A673 (cell line): ENCODE measurements at regions of chr10 and their contacts with region 1.

Region 1: GRCh38 chr10:4767033-4767814 is 58.8 kb upstream of the AKR1E2 start:
- DNase-seq: peak; percentile 80
- H3K4me3 ChIP-seq: no peak overlapping the region
- H3K27ac ChIP-seq: peak overlapping the region; percentile 71
- H3K4me1 ChIP-seq: peaks cover 61% of the 10 kb centered on the region
- H3K27me3 ChIP-seq: no peaks in the 10 kb centered on the region
- CTCF ChIP-seq: peak; percentile 81

Region 2: GRCh38 chr10:3197348-3198003 is 1569.7 kb before region 1 on chr10:
- CTCF ChIA-PET with region 1: no interaction called
- POLR2A ChIA-PET with region 1: no interaction called
- intact Hi-C with region 1: loop called (anchors 5 kb)
- DNase-seq: peak; percentile 83
- H3K4me3 ChIP-seq: peak overlapping the region; percentile 20
- H3K27ac ChIP-seq: no peak overlapping the region
- H3K4me1 ChIP-seq: peaks cover 11% of the 10 kb centered on the region
- H3K27me3 ChIP-seq: no peaks in the 10 kb centered on the region
- CTCF ChIP-seq: peak; percentile 91

Region 3: DNA sequence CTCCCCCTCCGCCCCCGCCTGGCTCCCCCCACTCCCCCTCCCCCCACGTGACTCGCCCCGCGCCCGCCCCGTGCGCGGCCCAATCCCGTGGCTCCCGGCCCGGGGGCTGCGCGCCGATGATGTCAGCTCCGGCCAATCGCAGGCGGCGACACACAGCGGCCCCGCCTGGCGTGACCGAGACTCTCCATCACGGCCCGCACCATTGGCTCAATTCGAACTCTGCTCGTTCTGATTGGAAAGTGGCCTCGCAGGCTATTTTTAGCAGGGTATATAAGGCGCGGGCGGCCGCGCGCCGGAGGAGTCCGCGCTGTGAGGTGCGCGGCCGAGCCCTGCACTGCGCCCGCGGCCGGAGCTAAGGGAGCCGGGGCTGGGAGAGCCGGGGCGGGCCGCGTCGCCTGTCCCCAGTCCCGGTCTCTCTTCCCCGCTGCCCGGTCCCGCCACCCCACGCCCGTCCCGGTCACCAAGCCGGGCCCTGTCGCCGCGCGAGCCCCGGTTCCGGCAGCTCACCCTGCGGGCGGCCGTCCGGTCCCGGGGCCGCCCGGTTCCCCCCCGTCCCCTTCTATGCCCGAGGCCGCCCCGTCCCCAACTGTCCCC is 981.9 kb before region 1 on chr10:
- CTCF ChIA-PET with region 1: no interaction called
- POLR2A ChIA-PET with region 1: no interaction called
- intact Hi-C with region 1: loop called (anchors 5 kb)
- DNase-seq: peak; percentile 98
- H3K4me3 ChIP-seq: peak overlapping the region; percentile 97
- H3K27ac ChIP-seq: peak overlapping the region; percentile 100
- H3K4me1 ChIP-seq: peaks cover 31% of the 10 kb centered on the region
- H3K27me3 ChIP-seq: no peaks in the 10 kb centered on the region
- CTCF ChIP-seq: no peak

Region 4: DNA sequence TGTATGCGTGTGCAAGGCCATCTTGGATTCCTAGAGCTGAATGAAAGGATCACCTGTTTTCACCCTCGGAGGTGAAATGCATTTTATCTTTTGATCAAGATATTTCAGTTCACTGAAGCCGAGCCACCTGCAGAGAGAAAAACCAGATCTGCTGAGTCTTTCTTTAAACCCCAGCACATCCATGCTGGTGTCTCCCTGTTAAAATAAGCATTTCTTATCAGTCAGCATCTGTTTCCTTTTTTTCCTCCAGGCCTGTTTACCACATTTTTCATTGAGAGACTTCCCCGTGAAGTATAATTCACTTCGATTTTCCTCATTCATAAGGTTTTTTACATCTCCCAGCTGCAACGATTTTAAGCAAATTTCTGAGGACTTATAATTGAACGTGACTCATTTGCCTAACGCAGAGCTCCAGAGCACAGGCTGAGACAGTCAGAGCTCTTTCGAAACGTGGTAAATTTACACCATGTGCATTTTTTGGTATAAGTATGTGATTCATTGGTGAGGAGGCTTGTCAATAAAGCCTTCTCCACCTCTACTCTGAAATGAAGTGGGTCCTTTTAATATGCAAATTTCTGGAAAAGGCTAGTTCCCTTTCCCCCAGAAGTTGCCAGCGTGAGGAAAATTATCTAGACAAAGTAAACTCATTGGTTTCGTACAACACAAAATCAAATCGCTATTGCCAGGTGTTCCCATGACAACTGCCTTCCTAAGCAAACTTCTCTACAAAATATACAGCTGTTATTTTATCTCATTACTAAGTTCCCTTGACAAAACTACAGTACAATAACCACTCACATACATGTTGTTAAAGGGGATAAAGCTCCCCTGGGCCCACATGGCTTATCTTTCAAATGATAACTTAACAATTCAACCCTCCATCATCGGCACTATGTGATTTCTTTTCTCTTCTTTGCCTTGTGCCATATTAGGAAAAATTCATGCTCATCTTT is 316.0 kb before region 1 on chr10:
- CTCF ChIA-PET with region 1: no interaction called
- POLR2A ChIA-PET with region 1: no interaction called
- intact Hi-C with region 1: no loop called
- DNase-seq: peak; percentile 41
- H3K4me3 ChIP-seq: no peak overlapping the region
- H3K27ac ChIP-seq: no peak overlapping the region
- H3K4me1 ChIP-seq: peaks cover 8% of the 10 kb centered on the region
- H3K27me3 ChIP-seq: peaks cover 7% of the 10 kb centered on the region
- CTCF ChIP-seq: no peak

Region 5: GRCh38 chr10:4512671-4513240 is 254.5 kb before region 1 on chr10:
- CTCF ChIA-PET with region 1: no interaction called
- POLR2A ChIA-PET with region 1: no interaction called
- intact Hi-C with region 1: loop called (anchors 2 kb)
- DNase-seq: peak; percentile 73
- H3K4me3 ChIP-seq: no peak overlapping the region
- H3K27ac ChIP-seq: no peak overlapping the region
- H3K4me1 ChIP-seq: no peaks in the 10 kb centered on the region
- H3K27me3 ChIP-seq: no peaks in the 10 kb centered on the region
- CTCF ChIP-seq: peak; percentile 78

Region 6: DNA sequence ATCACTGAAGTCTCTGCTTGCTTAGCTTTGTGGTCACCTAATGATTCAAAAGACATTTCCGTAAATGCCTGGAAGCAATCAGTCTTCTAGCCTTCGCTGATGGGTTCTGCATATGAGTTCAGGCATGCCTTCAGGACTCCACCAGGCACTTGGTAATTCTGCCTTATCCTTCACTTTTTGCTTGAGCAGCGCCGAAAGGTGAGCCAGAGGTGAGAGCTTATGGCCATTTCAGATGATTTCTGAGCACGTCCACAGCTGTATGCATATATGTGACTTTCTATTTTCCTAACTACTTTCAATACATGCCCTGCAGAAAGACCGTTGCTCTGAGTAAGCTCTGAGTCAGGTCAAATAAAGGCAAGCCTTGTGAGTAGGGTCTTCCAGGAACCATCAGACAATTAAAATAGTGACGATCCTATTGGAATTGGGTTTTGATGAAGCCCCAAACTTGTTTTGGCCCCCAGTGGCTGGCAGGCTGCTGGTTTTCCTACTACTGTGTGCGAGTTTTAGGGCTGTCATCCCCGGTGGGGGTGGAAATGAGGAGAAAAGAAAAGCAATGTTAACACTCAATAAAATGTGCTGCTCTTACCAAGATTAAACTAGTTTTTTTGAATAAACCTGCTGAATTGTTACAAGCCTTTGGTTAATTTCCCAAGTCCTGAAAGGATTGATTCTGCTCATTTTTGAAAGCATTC is 95.6 kb before region 1 on chr10:
- CTCF ChIA-PET with region 1: no interaction called
- POLR2A ChIA-PET with region 1: no interaction called
- intact Hi-C with region 1: no loop called
- DNase-seq: no peak
- H3K4me3 ChIP-seq: no peak overlapping the region
- H3K27ac ChIP-seq: no peak overlapping the region
- H3K4me1 ChIP-seq: no peaks in the 10 kb centered on the region
- H3K27me3 ChIP-seq: no peaks in the 10 kb centered on the region
- CTCF ChIP-seq: no peak

Region 7: GRCh38 chr10:4686644-4686996 is 80.6 kb before region 1 on chr10:
- CTCF ChIA-PET with region 1: no interaction called
- POLR2A ChIA-PET with region 1: no interaction called
- intact Hi-C with region 1: loop called (anchors 5 kb)
- DNase-seq: no peak
- H3K4me3 ChIP-seq: no peak overlapping the region
- H3K27ac ChIP-seq: no peak overlapping the region
- H3K4me1 ChIP-seq: peaks cover 7% of the 10 kb centered on the region
- H3K27me3 ChIP-seq: no peaks in the 10 kb centered on the region
- CTCF ChIP-seq: no peak

Region 8: GRCh38 chr10:5199398-5199797 is 432.2 kb after region 1 on chr10:
- CTCF ChIA-PET with region 1: no interaction called
- POLR2A ChIA-PET with region 1: no interaction called
- intact Hi-C with region 1: no loop called
- DNase-seq: no peak
- H3K4me3 ChIP-seq: no peak overlapping the region
- H3K27ac ChIP-seq: no peak overlapping the region
- H3K4me1 ChIP-seq: no peaks in the 10 kb centered on the region
- H3K27me3 ChIP-seq: no peaks in the 10 kb centered on the region
- CTCF ChIP-seq: no peak